Lower leg skin (tissue), 4 donors: ENCODE measurements at regions of chr17 and their contacts with region 1.

Region 1: GRCh38 chr17:58577642-58578091 is 63.2 kb upstream of the MTMR4 start:
- DNase-seq: peak; percentile 44 to 86
- H3K4me3 ChIP-seq: no peak overlapping the region
- CTCF ChIP-seq: no peak
- POLR2A ChIP-seq: no peak

Region 2: DNA sequence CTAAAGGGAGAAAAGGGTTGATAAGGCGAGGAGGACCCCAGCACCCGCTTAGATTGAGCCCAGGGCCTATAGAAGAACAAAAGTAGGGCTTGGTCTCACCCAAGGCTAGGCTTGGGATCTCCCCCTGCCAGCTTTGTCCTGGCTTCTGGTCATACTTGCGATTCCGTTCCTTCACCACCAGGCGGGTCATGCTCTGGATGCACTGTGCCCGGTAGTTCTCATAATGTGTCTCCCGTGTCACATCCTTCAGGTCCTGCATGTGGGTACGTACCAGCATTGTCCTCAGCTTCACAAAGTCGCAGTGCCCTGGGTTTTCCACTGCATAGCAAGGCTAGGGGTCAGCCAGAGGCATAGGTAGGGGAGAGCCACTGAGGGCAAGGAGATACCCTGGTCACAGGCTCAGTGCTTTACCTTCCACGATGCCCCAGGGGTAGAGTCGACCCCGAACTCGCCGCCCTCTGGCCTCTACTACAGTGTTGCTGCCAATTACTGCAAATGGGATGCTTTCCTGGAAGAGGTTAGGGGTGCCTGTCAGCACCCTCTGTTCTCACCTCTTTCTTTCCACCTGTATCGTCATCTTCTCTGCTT is 56.7 kb before region 1 on chr17:
- intact Hi-C with region 1: loop called (anchors 10 kb)
- DNase-seq: no peak
- H3K4me3 ChIP-seq: no peak overlapping the region
- CTCF ChIP-seq: no peak
- POLR2A ChIP-seq: no peak